ENCODE measurements at regions of chr11 and their contacts with region 1.

Region 1: DNA sequence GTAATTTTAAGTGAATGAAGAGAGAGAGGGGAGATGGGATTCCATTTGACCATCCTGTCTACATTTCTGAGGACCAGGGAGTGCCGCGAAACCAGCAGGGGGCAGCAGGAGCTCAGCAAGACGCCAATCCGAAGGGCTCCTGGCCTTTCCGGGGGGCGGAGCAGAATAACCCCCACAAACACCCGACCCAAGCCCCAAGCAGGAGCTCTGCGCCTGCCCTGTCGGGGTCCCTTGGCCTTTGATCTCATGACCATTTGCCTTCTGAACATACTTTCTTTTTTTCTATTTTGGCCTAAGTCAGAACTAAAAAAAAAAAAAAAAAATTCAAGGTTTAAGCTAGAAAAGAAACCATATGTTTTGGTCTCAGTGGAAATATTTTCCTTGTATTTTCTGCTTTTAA is 21.9 kb upstream of the SCN2B start:
- DNase-seq: peak; percentile 87 to 94 (median 93)
- ATAC-seq: peak; percentile 56 to 72
- H3K4me3 ChIP-seq: no peak overlapping the region
- H3K27ac ChIP-seq: no peak overlapping the region
- H3K4me1 ChIP-seq: peaks cover 3% of the 10 kb centered on the region
- H3K27me3 ChIP-seq: no peaks in the 10 kb centered on the region

Region 2: GRCh38 chr11:117946842-117947526 is 251.4 kb before region 1 on chr11:
- intact Hi-C with region 1: no loop called
- DNase-seq: peak; percentile 89 to 95 (median 94)
- ATAC-seq: peak; percentile 93 to 95
- H3K4me3 ChIP-seq: no peak overlapping the region
- H3K27ac ChIP-seq: no peak overlapping the region
- H3K4me1 ChIP-seq: no peaks in the 10 kb centered on the region
- H3K27me3 ChIP-seq: no peaks in the 10 kb centered on the region

Region 3: GRCh38 chr11:118290923-118291322 is 92.6 kb after region 1 on chr11:
- intact Hi-C with region 1: loop called in 2 of 4 experiments (anchors 2 kb)
- DNase-seq: no peak
- ATAC-seq: peak; percentile 81 to 88
- H3K4me3 ChIP-seq: no peak overlapping the region
- H3K27ac ChIP-seq: no peak overlapping the region
- H3K4me1 ChIP-seq: no peaks in the 10 kb centered on the region
- H3K27me3 ChIP-seq: no peaks in the 10 kb centered on the region

Region 4: DNA sequence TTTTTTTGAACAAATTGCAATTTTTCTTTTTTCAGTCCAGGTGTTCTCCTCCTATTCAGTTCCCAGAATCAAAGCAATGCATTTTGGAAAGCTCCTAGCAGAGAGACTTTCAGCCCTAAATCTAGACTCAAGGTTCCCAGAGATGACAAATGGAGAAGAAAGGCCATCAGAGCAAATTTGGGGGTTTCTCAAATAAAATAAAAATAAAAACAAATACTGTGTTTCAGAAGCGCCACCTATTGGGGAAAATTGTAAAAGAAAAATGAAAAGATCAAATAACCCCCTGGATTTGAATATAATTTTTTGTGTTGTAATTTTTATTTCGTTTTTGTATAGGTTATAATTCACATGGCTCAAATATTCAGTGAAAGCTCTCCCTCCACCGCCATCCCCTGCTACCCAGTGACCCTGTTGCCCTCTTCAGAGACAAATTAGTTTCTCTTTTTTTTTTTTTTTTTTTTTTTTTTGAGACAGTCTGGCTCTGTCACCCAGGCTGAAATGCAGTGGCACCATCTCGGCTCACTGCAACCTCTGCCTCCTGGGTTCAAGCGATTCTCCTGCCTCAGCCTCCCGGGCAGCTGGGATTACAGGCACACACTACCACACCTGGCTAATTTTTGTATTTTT is 154.8 kb after region 1 on chr11:
- intact Hi-C with region 1: loop called in 2 of 4 experiments (anchors 5 kb)
- DNase-seq: no peak
- ATAC-seq: no peak
- H3K4me3 ChIP-seq: no peak overlapping the region
- H3K27ac ChIP-seq: no peak overlapping the region
- H3K4me1 ChIP-seq: no peaks in the 10 kb centered on the region
- H3K27me3 ChIP-seq: peaks cover 2% of the 10 kb centered on the region

Region 5: GRCh38 chr11:118359295-118359958 is 161.1 kb after region 1 on chr11 and contains the start of gene UBE4A:
- intact Hi-C with region 1: loop called in 2 of 4 experiments (anchors 5 kb)
- DNase-seq: peak; percentile 97 to 99 (median 98)
- ATAC-seq: peak; percentile 95 to 96
- H3K4me3 ChIP-seq: peak within 1 kb of the TSS; percentile 93
- H3K27ac ChIP-seq: peak within 1 kb of the TSS; percentile 51
- H3K4me1 ChIP-seq: peaks cover 4% of the 10 kb centered on the region
- H3K27me3 ChIP-seq: no peaks in the 10 kb centered on the region
- total RNA-seq, gene UBE4A: 40.7 to 45.8 (median 43.6) TPM

Region 6: DNA sequence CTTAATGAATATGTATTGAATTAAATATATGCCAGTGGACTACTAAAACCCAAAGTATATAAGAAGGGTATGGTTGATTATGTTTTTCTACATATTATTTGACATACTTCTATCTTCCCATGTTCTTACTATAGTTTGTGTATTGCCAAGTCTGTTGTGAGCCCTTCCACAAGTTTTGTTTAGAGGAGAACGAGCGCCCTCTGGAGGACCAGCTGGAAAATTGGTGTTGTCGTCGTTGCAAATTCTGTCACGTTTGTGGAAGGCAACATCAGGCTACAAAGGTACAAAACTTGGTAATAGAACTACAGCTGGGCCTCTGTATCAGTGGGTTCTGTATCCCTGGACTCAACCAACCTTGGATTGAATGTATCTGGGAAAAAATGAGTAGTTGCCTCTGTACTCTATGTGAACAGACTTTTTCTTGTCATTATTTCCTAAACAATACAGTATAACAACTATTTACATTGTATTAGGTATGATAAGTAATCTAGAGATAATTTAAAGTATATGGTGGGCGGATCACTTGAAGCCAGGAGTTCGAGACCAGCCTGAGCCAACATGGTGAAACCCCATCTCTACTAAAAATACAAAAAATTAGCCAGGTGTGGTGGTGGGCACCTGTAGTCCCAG is 290.2 kb after region 1 on chr11:
- intact Hi-C with region 1: loop called in 1 of 4 experiments (anchors 10 kb)
- DNase-seq: peak; percentile 58 to 77 (median 65)
- ATAC-seq: peak; percentile 59 to 64
- H3K4me3 ChIP-seq: no peak overlapping the region
- H3K27ac ChIP-seq: no peak overlapping the region
- H3K4me1 ChIP-seq: no peaks in the 10 kb centered on the region
- H3K27me3 ChIP-seq: no peaks in the 10 kb centered on the region